Posterior vena cava (tissue), 2 donors: ENCODE measurements at regions of chr11 and their contacts with region 1.

Region 1: GRCh38 chr11:86355256-86355655 is 19.4 kb upstream of the CCDC81 start:
- DNase-seq: no peak

Region 2: GRCh38 chr11:86632499-86633269 is 277.4 kb after region 1 on chr11:
- intact Hi-C with region 1: loop called in 1 of 2 experiments (anchors 5 kb)
- DNase-seq: peak; percentile 83